Esophagus muscularis mucosa (tissue), 4 donors: ENCODE measurements at regions of chr14 and their contacts with region 1.

Region 1: GRCh38 chr14:92783816-92784431 is 10.2 kb upstream of the GOLGA5 start:
- DNase-seq: no peak
- H3K4me3 ChIP-seq: no peak overlapping the region
- H3K27ac ChIP-seq: no peak overlapping the region
- H3K4me1 ChIP-seq: peaks cover 0 to 4% (median 0%) of the 10 kb centered on the region in 4 donors
- H3K27me3 ChIP-seq: no peaks in the 10 kb centered on the region
- CTCF ChIP-seq: peak; percentile 34 to 64 (median 57)
- EP300 ChIP-seq: no peak
- POLR2A ChIP-seq: no peak

Region 2: GRCh38 chr14:92719890-92720323 is 64.0 kb before region 1 on chr14:
- intact Hi-C with region 1: loop called (anchors 2 kb)
- DNase-seq: no peak
- H3K4me3 ChIP-seq: no peak overlapping the region
- H3K27ac ChIP-seq: peak overlapping the region; percentile 16 to 57 (median 32)
- H3K4me1 ChIP-seq: peaks cover 12 to 17% (median 16%) of the 10 kb centered on the region in 4 donors
- H3K27me3 ChIP-seq: no peaks in the 10 kb centered on the region
- CTCF ChIP-seq: no peak
- EP300 ChIP-seq: no peak
- POLR2A ChIP-seq: no peak